ENCODE measurements at regions of chr1 and their contacts with region 1.

Region 1: DNA sequence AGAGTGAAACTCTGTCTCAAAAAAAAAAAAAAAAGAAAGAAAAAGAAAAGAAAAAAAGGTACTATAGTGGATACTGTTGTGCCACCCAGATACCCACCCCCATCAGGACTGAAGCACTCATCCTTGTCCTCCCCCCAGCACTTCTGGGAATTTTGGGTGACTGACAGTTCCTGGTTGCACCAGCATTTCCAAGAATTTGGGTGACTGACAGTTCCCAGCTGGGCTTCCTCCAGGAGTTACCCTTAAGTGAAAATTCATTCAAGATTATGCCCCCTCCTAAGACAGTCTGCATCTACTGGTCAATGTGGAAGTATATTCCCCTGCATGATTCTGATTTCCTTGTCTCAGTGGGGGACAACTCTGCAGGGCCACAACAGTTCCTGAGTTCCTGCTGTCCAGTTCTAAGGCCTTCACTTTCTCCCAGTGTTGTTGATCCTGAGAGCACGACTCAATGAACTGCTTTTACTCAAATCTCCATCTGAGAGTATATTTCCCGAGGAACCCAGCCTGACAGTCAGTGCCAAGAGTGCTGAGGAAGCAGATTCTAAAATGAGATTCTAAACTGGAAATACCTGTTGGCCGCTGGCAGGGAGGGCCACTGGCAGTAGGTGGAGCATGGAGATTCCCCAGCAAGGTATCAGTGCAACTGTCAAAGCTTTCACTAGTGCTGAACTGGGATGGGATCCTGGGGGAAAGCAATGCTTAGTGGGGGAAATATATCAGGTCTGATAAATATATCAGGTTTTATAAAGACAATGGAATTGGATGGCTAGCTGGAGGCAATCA is 18.5 kb downstream of the RIIAD1 start:
- DNase-seq: no peak
- H3K4me3 ChIP-seq: no peak overlapping the region
- H3K27me3 ChIP-seq: peaks cover 4% of the 10 kb centered on the region
- CTCF ChIP-seq: no peak

Region 2: GRCh38 chr1:151534665-151535278 is 205.0 kb before region 1 on chr1:
- CTCF ChIA-PET with region 1: interaction called, 13 read pairs
- POLR2A ChIA-PET with region 1: no interaction called
- DNase-seq: no peak
- H3K4me3 ChIP-seq: no peak overlapping the region
- H3K27me3 ChIP-seq: peaks cover 2% of the 10 kb centered on the region; the same call in 1 of the 2 replicates
- CTCF ChIP-seq: peak; percentile 98

Region 3: GRCh38 chr1:151581952-151582351 is 157.8 kb before region 1 on chr1:
- CTCF ChIA-PET with region 1: interaction called, 3 read pairs
- POLR2A ChIA-PET with region 1: interaction called, 14 read pairs
- DNase-seq: no peak
- H3K4me3 ChIP-seq: no peak overlapping the region
- H3K27me3 ChIP-seq: no peaks in the 10 kb centered on the region
- CTCF ChIP-seq: no peak